Natural killer cell (primary cell): ENCODE measurements at regions of chr12 and their contacts with region 1.

Region 1: GRCh38 chr12:120265473-120266179 is at the start of gene PXN:
- DNase-seq: peak; percentile 95
- ATAC-seq: peak; percentile 88 to 99 (median 93)
- H3K4me3 ChIP-seq: peak within 1 kb of the TSS; percentile 80
- H3K4me3 Mint-ChIP-seq: peak within 1 kb of the TSS; percentile 94
- H3K27ac ChIP-seq: peak within 1 kb of the TSS; percentile 75
- H3K27ac Mint-ChIP-seq: peak within 1 kb of the TSS; percentile 93 to 94
- H3K4me1 ChIP-seq: peaks cover 49% of the 10 kb centered on the region
- H3K4me1 Mint-ChIP-seq: peaks cover 48 to 49% of the 10 kb centered on the region in 2 donors
- H3K27me3 ChIP-seq: no peaks in the 10 kb centered on the region
- H3K27me3 Mint-ChIP-seq: no peaks in the 10 kb centered on the region
- CTCF ChIP-seq: peak; percentile 65
- total RNA-seq, gene PXN: 436 to 504 (median 478) TPM

Region 2: DNA sequence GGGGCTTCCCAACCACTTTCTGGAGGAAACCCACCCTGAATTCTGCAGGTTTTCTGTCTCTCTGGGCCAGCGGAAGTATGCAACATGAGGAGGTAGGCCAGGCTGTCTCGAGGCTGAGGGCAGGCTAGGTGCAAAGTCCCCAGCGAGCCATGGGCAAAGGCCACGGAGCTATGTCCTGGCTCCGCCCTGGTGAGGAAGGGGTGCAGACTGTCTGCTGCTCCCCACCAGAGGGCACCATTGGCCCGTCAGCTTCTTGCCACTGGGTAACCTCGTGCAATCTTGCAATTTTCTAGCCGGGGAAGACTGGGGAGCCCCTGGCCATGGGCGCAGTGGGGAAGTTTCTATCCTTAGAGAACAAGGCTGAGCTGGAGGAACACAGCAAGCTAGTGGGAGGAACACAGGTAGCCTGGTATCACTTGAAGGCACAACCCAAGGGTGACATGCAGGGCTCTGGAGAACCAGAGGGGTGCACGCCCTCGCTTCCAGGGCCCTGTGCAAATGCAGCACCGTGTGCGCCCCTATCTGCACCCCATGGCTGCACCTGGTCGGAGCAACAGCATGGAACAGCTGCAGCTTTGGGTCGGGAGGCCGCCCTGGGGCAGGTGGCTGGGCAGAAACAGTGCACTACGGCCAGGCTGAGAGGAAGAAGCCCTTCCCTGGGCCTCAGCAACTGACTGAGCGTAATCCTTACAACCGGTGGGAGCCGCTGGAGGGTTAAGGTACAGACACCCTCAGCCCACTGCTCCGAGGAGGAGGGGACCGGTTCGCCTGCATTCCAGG is 37.1 kb before region 1 on chr12:
- intact Hi-C with region 1: loop called (anchors 1 kb)
- DNase-seq: peak; percentile 85 to 94
- ATAC-seq: peak; percentile 69 to 90 (median 82)
- H3K4me3 ChIP-seq: peak overlapping the region; percentile 2
- H3K4me3 Mint-ChIP-seq: peak overlapping the region; percentile 89
- H3K27ac ChIP-seq: peak overlapping the region; percentile 19
- H3K27ac Mint-ChIP-seq: peak overlapping the region; percentile 76 to 84
- H3K4me1 ChIP-seq: peaks cover 98% of the 10 kb centered on the region
- H3K4me1 Mint-ChIP-seq: peaks cover 86 to 95% of the 10 kb centered on the region in 2 donors
- H3K27me3 ChIP-seq: no peaks in the 10 kb centered on the region
- H3K27me3 Mint-ChIP-seq: no peaks in the 10 kb centered on the region
- CTCF ChIP-seq: peak; percentile 94

Region 3: DNA sequence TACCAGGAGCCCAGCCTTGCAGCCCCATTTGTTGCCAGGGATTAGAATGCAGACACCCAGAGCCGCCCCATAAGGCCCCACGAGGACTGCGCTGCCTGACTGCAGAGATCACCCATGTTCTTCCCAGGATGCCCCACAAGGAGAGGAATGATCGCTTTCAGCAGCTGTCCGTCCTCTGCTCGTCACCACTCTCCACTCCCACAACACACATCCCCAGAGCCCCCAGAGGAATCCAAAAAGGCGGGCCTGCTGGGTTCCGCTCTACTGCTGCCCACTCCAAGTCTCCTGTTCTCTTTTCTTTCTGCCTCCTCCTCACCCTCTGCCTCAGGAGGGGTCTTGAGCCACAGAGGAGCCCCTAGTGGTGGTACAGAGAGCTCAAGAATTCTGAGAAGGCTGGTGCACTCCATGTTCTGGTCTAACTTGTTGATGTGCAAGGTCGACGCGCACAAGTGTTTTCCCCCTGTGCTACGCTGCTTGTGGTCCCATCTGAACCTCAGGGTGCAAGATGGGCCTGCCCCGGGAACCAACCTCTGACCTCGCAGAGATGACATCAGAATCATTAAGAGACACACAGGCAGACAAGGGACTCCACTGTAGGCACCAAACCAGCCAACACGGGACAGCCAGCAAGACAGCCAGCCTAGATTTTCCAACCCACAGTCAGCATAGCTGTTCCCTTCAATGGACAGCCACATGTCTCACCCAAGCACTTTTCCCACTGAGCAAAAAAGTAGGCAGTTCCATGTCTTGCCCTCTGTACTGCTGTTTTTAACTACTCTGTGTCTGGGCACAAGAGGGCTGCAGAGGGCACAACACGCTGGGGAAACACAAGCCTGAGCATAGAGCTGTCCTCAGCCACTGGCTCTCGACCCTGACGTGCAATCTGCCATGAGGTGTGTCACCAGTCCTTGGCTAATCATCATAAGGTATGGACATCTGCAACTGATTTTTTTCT is 30.0 kb before region 1 on chr12:
- intact Hi-C with region 1: loop called (anchors 1 kb)
- DNase-seq: peak; percentile 43 to 49
- ATAC-seq: peak; percentile 52 to 70 (median 63)
- H3K4me3 ChIP-seq: no peak overlapping the region
- H3K4me3 Mint-ChIP-seq: peak overlapping the region; percentile 87
- H3K27ac ChIP-seq: peak overlapping the region; percentile 54
- H3K27ac Mint-ChIP-seq: peak overlapping the region; percentile 76 to 84
- H3K4me1 ChIP-seq: peaks cover 100% of the 10 kb centered on the region
- H3K4me1 Mint-ChIP-seq: peaks cover 82 to 89% of the 10 kb centered on the region in 2 donors
- H3K27me3 ChIP-seq: no peaks in the 10 kb centered on the region
- H3K27me3 Mint-ChIP-seq: no peaks in the 10 kb centered on the region
- CTCF ChIP-seq: peak; percentile 9